KBM-7 (cell line): ENCODE measurements at regions of chr17 and their contacts with region 1.

Region 1: GRCh38 chr17:30093463-30094147 is 23.0 kb upstream of the NSRP1 start:
- DNase-seq: peak; percentile 93

Region 2: DNA sequence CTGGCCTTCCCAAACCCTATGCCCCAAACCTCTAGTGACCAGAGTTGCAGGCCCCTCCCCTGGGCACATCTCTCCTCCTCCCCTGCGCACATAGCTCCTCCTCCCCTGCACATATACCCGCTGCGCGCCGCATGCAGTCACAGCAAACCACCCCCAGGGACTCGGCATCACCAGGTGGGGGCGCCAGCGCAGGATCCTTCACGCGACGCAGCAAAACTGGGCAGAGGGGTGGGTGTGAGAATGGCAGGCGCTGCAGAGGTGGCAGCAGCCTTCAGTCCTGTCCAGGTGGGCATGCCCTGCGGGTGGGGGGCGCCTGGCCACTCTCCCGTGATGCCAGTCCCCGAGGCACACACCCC is 476.5 kb before region 1 on chr17:
- in situ Hi-C with region 1: loop called (anchors 25 kb)
- DNase-seq: peak; percentile 95

Region 3: DNA sequence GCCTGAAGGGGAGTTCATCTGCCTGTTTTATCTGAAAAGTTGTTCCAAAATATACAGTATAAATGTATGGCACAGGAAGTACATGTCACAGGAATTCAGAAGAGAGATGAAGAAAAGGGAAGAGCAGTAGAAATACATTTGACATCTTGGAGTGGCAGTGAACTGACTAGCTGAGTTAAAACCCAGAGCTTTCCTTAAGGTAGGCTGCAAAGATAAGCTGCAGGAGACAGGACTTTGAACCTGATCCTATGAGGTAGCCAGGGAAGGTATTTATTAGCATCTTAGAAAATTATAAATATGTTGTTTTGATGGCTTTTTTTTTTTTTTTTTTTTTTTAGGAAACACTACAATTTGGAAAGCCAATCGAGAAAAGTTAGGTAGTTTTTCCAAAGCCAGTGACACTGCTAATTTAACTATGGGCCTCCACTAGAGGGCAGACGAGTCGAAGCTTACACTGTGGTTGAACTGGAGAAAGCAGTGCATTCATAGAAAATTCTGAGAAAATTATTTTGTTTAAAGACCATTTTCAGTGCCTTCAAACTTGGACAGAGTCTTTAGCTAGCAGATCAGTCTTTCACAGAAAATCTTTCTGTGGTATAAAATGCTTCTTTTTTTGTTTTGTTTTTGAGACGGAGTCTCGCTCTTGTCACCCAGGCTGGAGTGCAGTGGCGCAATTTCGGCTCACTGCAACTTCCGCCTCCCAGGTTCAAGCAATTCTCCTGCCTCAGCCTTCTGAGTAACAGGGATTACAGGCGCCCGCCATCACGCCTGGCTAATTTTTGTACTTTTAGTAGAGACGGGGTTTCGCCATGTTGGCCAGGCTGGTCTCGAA is 285.9 kb before region 1 on chr17:
- in situ Hi-C with region 1: loop called (anchors 25 kb)
- DNase-seq: peak; percentile 75

Region 4: DNA sequence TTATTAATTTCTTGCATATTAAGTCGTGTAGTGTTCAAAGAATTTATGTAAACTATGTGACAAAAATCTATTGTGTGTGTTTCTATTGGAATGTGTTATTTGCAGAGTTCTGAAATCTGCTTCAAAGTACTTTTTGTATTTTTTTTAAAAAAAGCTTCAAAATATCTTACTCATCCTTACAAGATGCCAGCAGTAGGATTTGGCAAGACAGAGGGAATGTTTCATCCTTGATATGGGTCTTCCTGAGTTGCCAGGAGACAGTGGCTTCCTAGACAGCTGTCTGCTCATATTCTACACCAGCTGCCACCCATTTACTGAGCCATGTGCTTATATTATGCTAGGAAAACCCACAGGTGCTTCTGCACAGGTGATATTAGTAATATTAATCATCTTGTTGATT is 115.8 kb before region 1 on chr17:
- in situ Hi-C with region 1: loop called (anchors 25 kb)
- DNase-seq: no peak

Region 5: GRCh38 chr17:30212750-30213149 is 119.1 kb after region 1 on chr17:
- in situ Hi-C with region 1: no loop called
- DNase-seq: no peak